Activated B cell treated with CpG ODN at 0.5 μM for 24 hours (primary cell): ENCODE measurements at regions of chr16 and their contacts with region 1.

Region 1: DNA sequence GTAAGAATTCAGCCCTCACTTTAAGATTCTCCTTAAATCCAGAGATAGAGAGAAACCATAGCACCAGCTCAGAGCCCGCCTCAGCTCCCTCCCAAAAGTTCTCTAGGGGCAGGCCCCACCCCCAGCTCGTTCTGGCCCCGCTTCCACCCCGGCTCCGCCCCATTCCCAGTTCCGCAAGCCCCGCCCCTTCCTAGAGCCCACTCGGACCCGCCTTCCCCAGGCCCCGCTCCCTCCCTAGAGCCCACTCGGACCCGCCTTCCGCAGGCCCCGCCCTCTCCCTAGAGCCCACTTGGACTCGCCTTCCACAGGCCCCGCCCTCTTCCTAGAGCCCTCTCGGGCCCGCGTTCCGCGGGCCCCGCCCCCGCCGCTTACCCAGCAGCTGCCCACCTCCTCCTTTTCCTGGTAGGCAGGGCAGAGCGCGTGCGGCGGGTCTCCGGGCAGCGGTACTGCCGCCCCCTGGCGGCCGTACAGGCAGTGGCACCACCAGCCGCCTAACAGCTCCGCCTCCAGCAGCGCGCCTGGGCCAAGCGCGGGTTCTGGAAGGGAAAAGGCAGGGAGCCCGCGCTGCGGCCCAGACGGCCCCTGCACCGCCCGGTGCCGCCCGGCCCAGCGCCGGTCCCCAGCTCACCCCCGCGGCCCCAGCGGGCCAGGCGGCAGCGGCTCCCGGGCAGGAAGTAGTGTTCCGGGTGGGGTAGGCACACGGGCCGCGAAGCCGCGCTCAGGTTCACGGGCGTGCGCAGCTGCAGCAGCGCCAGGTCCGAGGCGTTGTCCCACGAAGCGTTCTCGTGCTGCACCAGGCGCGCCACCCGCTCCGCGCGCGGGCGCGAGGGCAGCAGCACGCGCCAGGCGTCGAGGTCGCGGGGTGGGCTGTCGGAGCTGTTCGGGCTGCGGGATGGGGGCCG is 6.8 kb upstream of the PRSS8 start:
- DNase-seq: peak; percentile 97
- ATAC-seq: peak; percentile 96
- H3K4me3 Mint-ChIP-seq: peak overlapping the region; percentile 65
- H3K27ac Mint-ChIP-seq: peak overlapping the region; percentile 80
- H3K4me1 Mint-ChIP-seq: peaks cover 12% of the 10 kb centered on the region
- H3K27me3 Mint-ChIP-seq: peaks cover 5% of the 10 kb centered on the region
- CTCF ChIP-seq: no peak

Region 2: DNA sequence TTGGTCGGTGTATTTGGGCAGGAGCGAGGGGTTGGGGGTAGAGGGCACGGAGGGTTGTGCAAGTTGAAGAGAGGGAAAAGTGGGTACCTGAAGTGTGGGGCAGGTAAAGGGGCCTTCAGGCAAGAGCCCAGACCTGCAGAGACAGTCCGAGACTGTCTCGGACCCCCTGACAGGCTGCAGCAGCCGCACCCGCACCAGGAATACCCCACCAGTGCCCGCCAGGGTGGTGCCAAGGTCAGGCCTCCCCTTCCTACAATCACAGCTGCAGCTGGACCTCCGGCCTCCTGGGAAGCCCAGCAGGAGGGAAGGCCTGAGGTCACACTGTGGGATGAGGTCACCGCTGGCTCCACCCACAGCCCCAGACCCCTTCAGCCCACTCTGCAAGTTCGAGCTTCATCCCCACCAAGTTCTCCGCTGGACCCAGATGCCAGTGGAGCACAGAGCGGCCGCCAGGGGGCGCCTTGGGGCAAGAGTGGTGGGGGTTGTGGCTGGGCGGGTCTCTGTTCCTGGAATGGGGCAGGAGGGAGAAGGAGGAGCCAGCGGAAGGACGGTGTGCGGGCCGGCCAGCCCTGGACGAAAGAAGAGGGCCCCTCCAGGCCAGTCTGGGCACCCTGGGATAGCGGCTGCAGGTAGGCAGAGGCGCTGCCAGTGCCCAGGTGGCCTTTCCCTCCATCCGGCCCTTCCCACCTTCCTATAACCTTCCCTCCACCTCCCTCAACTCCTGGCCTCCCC is 157.5 kb before region 1 on chr16 and contains the start of gene HSD3B7:
- CTCF ChIA-PET with region 1: interaction called, 36 read pairs
- POLR2A ChIA-PET with region 1: interaction called, 5 read pairs
- intact Hi-C with region 1: loop called (anchors 1 kb)
- DNase-seq: peak; percentile 80
- ATAC-seq: peak; percentile 85
- H3K4me3 Mint-ChIP-seq: no peak within 1 kb of the TSS
- H3K27ac Mint-ChIP-seq: no peak within 1 kb of the TSS
- H3K4me1 Mint-ChIP-seq: no peaks in the 10 kb centered on the region
- H3K27me3 Mint-ChIP-seq: no peaks in the 10 kb centered on the region
- CTCF ChIP-seq: peak; percentile 80
- total RNA-seq, gene HSD3B7: 1.3 and 1.6 TPM in 2 replicates

Region 3: GRCh38 chr16:31073968-31074813 is 68.2 kb before region 1 on chr16 and contains the starts of genes ZNF646 and ZNF668:
- CTCF ChIA-PET with region 1: interaction called, 8 read pairs
- POLR2A ChIA-PET with region 1: interaction called, 48 read pairs
- intact Hi-C with region 1: loop called (anchors 1 kb)
- DNase-seq: peak; percentile 86
- ATAC-seq: peak; percentile 83
- H3K4me3 Mint-ChIP-seq: peak within 1 kb of the TSS; percentile 96
- H3K27ac Mint-ChIP-seq: peak within 1 kb of the TSS; percentile 91
- H3K4me1 Mint-ChIP-seq: peaks cover 34% of the 10 kb centered on the region
- H3K27me3 Mint-ChIP-seq: no peaks in the 10 kb centered on the region
- CTCF ChIP-seq: no peak
- total RNA-seq, gene ZNF646: 32.4 and 32.5 TPM in 2 replicates
- total RNA-seq, gene ZNF668: 8.3 and 10.1 TPM in 2 replicates

Region 4: GRCh38 chr16:31117391-31118197 is 24.8 kb before region 1 on chr16 and contains the start of gene KAT8:
- CTCF ChIA-PET with region 1: interaction called, 7 read pairs
- POLR2A ChIA-PET with region 1: interaction called, 98 read pairs
- intact Hi-C with region 1: loop called (anchors 1 kb)
- DNase-seq: peak; percentile 92
- ATAC-seq: peak; percentile 94
- H3K4me3 Mint-ChIP-seq: peak within 1 kb of the TSS; percentile 85
- H3K27ac Mint-ChIP-seq: peak within 1 kb of the TSS; percentile 85
- H3K4me1 Mint-ChIP-seq: peaks cover 22% of the 10 kb centered on the region
- H3K27me3 Mint-ChIP-seq: no peaks in the 10 kb centered on the region
- CTCF ChIP-seq: no peak
- total RNA-seq, gene KAT8: 82.1 and 93.7 TPM in 2 replicates

Region 5: GRCh38 chr16:31179747-31180459 is 37.5 kb after region 1 on chr16 and contains the start of gene FUS:
- CTCF ChIA-PET with region 1: interaction called, 12 read pairs
- POLR2A ChIA-PET with region 1: interaction called, 147 read pairs
- intact Hi-C with region 1: loop called (anchors 1 kb)
- DNase-seq: peak; percentile 91
- ATAC-seq: peak; percentile 69
- H3K4me3 Mint-ChIP-seq: peak within 1 kb of the TSS; percentile 96
- H3K27ac Mint-ChIP-seq: peak within 1 kb of the TSS; percentile 100
- H3K4me1 Mint-ChIP-seq: peaks cover 57% of the 10 kb centered on the region
- H3K27me3 Mint-ChIP-seq: no peaks in the 10 kb centered on the region
- CTCF ChIP-seq: no peak
- total RNA-seq, gene FUS: 681 and 752 TPM in 2 replicates

Region 6: DNA sequence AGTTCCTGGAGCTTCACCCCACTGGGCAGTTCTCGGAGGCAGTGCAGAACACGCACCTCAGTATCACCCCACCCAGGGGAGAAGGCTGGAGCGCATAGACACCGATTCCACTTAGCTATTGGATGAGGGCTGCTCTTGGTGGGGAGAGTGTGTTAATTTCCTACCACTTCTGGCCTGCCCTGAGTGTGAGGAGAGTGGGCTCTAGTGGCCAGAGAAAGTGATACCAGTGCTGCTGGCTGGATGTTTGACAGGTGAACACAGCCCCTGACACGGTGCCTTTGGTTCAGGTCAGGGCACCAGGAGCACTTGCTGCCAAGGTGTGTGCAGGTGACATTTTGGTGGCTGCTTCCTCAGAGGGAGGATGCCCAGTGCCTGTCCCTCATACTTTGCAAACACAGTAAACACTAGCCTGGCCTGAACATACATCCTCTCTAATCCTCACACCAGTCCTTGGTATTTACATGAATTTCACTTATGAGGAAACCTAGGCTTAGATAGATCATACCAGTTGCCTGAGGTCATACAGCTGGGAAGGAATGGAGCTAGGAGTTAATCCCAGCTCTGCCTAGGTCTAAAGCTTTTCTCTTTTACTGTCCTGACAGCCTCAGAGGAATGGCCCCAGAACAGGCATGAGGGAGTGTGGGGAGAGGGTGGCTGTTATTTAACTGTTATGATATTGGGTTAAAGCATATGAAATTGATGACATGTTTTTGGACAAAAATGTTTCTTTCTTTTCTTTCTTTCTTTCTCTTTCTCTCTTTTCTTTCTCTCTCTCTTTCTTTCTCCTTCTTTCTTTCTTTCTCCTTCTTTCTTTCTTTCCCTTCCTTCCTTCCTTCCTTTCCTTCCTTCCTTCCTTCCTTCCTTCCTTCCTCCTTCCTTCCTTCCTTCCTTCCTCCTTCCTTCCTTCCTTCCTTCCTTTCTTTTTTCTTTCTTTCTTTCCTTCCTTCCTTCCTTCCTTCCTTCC is 191.6 kb after region 1 on chr16:
- CTCF ChIA-PET with region 1: interaction called, 4 read pairs
- POLR2A ChIA-PET with region 1: interaction called, 10 read pairs
- intact Hi-C with region 1: loop called (anchors 1 kb)
- DNase-seq: no peak
- ATAC-seq: peak; percentile 91
- H3K4me3 Mint-ChIP-seq: no peak overlapping the region
- H3K27ac Mint-ChIP-seq: no peak overlapping the region
- H3K4me1 Mint-ChIP-seq: peaks cover 18% of the 10 kb centered on the region
- H3K27me3 Mint-ChIP-seq: peaks cover 13% of the 10 kb centered on the region
- CTCF ChIP-seq: no peak

Region 7: DNA sequence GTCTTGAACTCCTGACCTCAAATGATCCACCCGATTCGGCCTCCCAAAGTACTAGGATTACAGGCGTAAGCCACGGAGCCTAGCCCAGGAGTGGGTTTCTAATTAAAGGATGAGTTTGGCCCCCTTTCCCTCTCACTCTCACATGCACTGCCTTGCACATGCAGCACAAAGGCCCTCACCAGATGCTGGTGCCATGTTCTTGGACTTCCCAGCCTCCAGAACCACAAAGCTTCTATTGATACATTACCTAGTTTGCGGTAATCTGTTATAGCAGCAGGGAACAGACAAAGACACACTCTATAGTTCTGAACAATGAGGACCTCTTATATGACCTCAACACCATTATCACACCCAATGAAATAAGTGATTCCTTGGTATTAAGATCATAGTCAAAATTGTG is 232.9 kb after region 1 on chr16:
- CTCF ChIA-PET with region 1: no interaction called
- POLR2A ChIA-PET with region 1: no interaction called
- intact Hi-C with region 1: no loop called
- DNase-seq: no peak
- ATAC-seq: no peak
- H3K4me3 Mint-ChIP-seq: no peak overlapping the region
- H3K27ac Mint-ChIP-seq: no peak overlapping the region
- H3K4me1 Mint-ChIP-seq: peaks cover 3% of the 10 kb centered on the region
- H3K27me3 Mint-ChIP-seq: peaks cover 2% of the 10 kb centered on the region
- CTCF ChIP-seq: no peak